Cardiac septum (tissue), 1 donor: ENCODE measurements at regions of chr1 and their contacts with region 1.

Region 1: GRCh38 chr1:150925816-150926741 is at the start of gene SETDB1:
- DNase-seq: peak; percentile 96
- total RNA-seq, gene SETDB1: 15.5 TPM

Region 2: GRCh38 chr1:150629115-150629928 is 296.8 kb before region 1 on chr1 and contains the start of gene ENSA:
- intact Hi-C with region 1: loop called (anchors 10 kb)
- DNase-seq: peak; percentile 99
- total RNA-seq, gene ENSA: 141 TPM

Region 3: GRCh38 chr1:150876119-150876454 is 50.0 kb before region 1 on chr1:
- intact Hi-C with region 1: loop called (anchors 5 kb)
- DNase-seq: no peak

Region 4: DNA sequence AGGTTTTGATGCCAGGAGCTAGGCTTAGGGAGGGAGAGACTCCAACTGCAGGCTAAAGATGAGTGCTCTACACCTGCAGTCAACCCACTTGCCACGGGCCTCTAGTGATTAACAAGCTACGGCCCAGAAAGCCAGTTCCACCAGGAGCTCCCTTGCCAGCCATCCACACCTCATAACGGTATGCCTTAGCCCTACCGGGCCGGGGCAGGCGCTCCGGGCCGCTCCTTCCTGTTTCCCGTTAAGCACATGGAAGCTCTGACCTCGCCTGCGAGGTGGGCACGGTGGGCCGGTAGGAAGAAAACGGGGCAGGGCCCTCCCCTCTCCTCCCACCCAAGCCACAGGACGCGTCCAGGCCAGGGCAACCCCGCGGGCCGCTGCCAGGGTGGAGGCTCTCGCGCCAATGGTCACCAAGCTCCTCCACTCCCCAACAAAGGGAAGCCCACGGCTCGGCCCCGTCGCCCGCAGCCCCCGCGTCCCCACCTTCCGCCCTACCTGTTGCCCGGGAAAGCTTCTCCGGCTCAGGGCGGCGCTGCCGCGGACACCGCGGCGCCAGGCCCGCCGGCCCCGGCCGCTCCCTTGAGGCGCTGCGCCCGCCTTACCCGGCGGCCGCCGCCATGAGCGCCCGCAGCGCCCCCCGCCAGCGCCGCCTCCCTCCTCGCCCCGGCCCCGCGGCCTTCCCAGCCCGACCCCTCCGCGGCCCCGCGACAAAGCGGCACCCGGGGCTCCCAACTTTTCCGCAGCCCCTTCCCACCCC is 47.9 kb after region 1 on chr1:
- intact Hi-C with region 1: loop called (anchors 2 kb)
- DNase-seq: peak; percentile 80